ENCODE measurements at regions of chr18 and their contacts with region 1.

Region 1: GRCh38 chr18:10841203-10841602 is 308.2 kb downstream of the PIEZO2 start:
- DNase-seq: no peak
- ATAC-seq: peak; percentile 76

Region 2: DNA sequence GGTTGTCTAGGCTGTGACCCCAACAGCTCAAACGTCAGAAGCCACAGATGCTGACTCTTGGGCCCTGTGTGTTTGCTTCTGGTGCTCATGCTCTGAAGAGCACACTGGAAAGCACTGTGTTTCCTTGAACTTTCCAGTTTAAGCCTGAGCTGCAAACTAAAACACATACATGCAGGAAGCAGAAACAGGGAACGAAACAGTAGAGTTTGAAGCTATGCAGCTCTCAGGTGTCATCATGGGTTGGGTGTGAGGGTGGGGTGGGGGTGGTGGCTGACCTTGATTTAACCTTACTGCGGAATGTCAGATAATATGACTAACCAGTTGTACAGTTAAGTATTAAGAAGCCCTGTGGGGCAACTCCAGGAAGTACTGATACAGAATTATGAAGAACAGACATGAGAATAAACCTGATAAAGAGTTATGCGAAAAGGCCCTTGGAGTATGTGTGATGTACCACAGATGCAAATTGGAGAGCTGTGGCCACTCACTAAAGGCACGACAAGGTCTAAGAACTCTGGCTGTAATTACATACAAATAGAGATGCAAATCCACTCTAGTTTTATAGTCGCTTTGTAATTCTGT is 42.4 kb before region 1 on chr18:
- intact Hi-C with region 1: loop called (anchors 10 kb)
- DNase-seq: no peak
- ATAC-seq: peak; percentile 23

Region 3: GRCh38 chr18:11529081-11529480 is 687.9 kb after region 1 on chr18:
- intact Hi-C with region 1: loop called (anchors 10 kb)
- DNase-seq: no peak
- ATAC-seq: no peak

Measured in Right ventricle myocardium inferior (tissue), 1 donor.